BJ (cell line): ENCODE measurements at regions of chr7 and their contacts with region 1.

Region 1: GRCh38 chr7:108146070-108146837 is 16.1 kb upstream of the LAMB4 start:
- DNase-seq: peak; percentile 35
- H3K4me3 ChIP-seq: no peak overlapping the region; the same call in 1 of the 2 replicates
- H3K27me3 ChIP-seq: peaks cover 1% of the 10 kb centered on the region; the same call in 1 of the 2 replicates
- CTCF ChIP-seq: peak; percentile 93

Region 2: GRCh38 chr7:108002726-108003598 is 143.3 kb before region 1 on chr7 and contains the start of gene LAMB1:
- CTCF ChIA-PET with region 1: interaction called, 11 read pairs
- POLR2A ChIA-PET with region 1: no interaction called
- DNase-seq: no peak
- H3K4me3 ChIP-seq: peak within 1 kb of the TSS; percentile 66
- H3K27me3 ChIP-seq: no peaks in the 10 kb centered on the region; the same call in 1 of the 2 replicates
- CTCF ChIP-seq: 0 out of 2 replicates have a peak, but pooled peaks have one; percentile 7
- polyA plus RNA-seq, gene LAMB1: 171 and 204 TPM in 2 replicates

Region 3: GRCh38 chr7:108135446-108136190 is 10.6 kb before region 1 on chr7:
- CTCF ChIA-PET with region 1: interaction called, 17 read pairs
- POLR2A ChIA-PET with region 1: no interaction called
- DNase-seq: no peak
- H3K4me3 ChIP-seq: no peak overlapping the region
- H3K27me3 ChIP-seq: no peaks in the 10 kb centered on the region
- CTCF ChIP-seq: no peak